ENCODE measurements at regions of chr9 and their contacts with region 1.

Region 1: GRCh38 chr9:27333241-27334052 is 36.5 kb upstream of the EQTN start:
- DNase-seq: peak; percentile 21
- H3K4me3 ChIP-seq: no peak overlapping the region
- H3K27me3 ChIP-seq: peaks cover 1% of the 10 kb centered on the region
- CTCF ChIP-seq: peak; percentile 78

Region 2: GRCh38 chr9:27548055-27548741 is 214.8 kb after region 1 on chr9:
- CTCF ChIA-PET with region 1: interaction called, 60 read pairs
- POLR2A ChIA-PET with region 1: no interaction called
- DNase-seq: no peak
- H3K4me3 ChIP-seq: no peak overlapping the region
- H3K27me3 ChIP-seq: no peaks in the 10 kb centered on the region
- CTCF ChIP-seq: peak; percentile 48

Region 3: DNA sequence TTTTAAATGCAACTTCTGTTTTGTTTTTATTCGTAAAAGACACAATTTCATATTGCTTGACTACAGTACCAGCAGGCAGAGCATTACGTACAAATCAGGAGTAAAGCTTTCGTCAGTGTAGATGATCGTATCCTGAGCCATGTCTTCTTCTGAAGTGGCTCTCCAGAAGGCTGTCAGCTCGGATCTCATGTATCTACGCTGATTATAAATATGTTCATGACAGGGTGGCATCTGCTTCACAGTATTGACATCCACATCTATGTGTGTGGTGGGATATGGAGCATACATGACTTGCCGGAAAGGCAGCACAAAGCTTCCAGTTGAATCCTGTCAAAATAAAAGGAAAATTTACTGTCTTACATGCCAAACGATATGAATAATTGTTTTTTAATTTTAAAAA is 223.0 kb after region 1 on chr9:
- CTCF ChIA-PET with region 1: interaction called, 21 read pairs
- POLR2A ChIA-PET with region 1: no interaction called
- DNase-seq: no peak
- H3K4me3 ChIP-seq: no peak overlapping the region
- H3K27me3 ChIP-seq: no peaks in the 10 kb centered on the region
- CTCF ChIP-seq: no peak

Measured in BJ (cell line).